ENCODE measurements at regions of chr2 and their contacts with region 1.

Region 1: GRCh38 chr2:63614983-63615945 is 26.5 kb downstream of the MDH1 start:
- DNase-seq: peak; percentile 78 to 87
- H3K4me3 ChIP-seq: peak overlapping the region; percentile 35
- H3K4me3 Mint-ChIP-seq: peak overlapping the region; percentile 67
- H3K27ac Mint-ChIP-seq: peak overlapping the region; percentile 95
- H3K4me1 ChIP-seq: peaks cover 43% of the 10 kb centered on the region
- H3K4me1 Mint-ChIP-seq: peaks cover 44% of the 10 kb centered on the region
- H3K27me3 ChIP-seq: no peaks in the 10 kb centered on the region
- H3K27me3 Mint-ChIP-seq: no peaks in the 10 kb centered on the region
- CTCF ChIP-seq: no peak

Region 2: DNA sequence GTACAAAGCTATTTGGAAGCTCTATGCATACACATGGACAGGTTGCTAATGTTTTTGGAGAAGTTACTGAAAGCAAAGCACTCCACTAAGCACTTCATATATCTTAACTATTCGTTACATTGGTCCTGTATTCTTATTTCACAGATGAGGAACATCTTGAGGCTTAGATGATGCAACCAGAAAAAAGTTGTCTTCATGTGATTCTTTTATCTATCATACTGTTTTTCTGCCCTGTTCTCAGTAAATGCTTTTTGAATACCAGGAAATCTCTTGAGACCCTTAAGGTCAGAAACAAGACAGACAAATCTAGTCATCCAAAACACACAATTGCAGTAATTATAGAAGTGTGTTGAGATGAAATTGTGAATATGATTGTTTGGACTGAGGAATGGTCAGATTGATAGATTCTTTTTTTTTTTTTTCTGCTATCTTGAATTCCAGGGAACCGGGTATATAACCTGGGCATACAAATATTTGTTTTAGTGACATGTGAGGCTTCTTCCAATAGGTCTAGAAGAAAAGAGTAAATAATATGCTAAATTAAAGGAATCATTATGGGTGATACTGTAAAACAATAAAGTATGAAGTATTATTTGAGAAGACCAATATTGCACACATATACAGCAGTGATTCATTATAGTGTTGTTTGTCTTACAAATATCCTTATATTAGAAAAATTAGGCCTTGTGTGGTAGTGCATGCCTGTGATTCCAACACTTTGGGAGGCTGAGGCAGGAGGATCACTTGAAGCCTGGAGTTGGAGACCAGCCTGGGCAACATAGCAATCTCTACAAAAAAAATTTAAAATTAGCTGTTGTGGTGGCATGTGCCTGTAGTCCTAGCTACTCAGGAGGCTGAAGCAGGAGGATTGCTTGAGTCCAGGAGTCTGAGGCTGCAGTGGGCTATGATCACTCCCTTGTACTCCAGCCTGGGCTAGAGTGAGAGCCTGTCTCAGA is 876.0 kb before region 1 on chr2:
- CTCF ChIA-PET with region 1: no interaction called
- POLR2A ChIA-PET with region 1: no interaction called
- intact Hi-C with region 1: no loop called
- DNase-seq: no peak
- H3K4me3 ChIP-seq: no peak overlapping the region
- H3K4me3 Mint-ChIP-seq: no peak overlapping the region
- H3K27ac Mint-ChIP-seq: no peak overlapping the region
- H3K4me1 ChIP-seq: peaks cover 41% of the 10 kb centered on the region
- H3K4me1 Mint-ChIP-seq: peaks cover 46% of the 10 kb centered on the region
- H3K27me3 ChIP-seq: no peaks in the 10 kb centered on the region
- H3K27me3 Mint-ChIP-seq: no peaks in the 10 kb centered on the region
- CTCF ChIP-seq: no peak

Region 3: GRCh38 chr2:63588385-63589147 is 26.7 kb before region 1 on chr2 and contains the starts of genes MDH1 and WDPCP:
- CTCF ChIA-PET with region 1: no interaction called
- POLR2A ChIA-PET with region 1: interaction called, 8 read pairs
- intact Hi-C with region 1: loop called (anchors 1 kb)
- DNase-seq: peak; percentile 96 to 99
- H3K4me3 ChIP-seq: peak within 1 kb of the TSS; percentile 95
- H3K4me3 Mint-ChIP-seq: peak within 1 kb of the TSS; percentile 92
- H3K27ac Mint-ChIP-seq: peak within 1 kb of the TSS; percentile 96
- H3K4me1 ChIP-seq: 0 out of 2 replicates have a peak, but pooled peaks cover 7% of the 10 kb centered on the region
- H3K4me1 Mint-ChIP-seq: peaks cover 11% of the 10 kb centered on the region
- H3K27me3 ChIP-seq: no peaks in the 10 kb centered on the region
- H3K27me3 Mint-ChIP-seq: no peaks in the 10 kb centered on the region
- CTCF ChIP-seq: no peak
- total RNA-seq, gene MDH1: 159 and 181 TPM in 2 replicates
- total RNA-seq, gene WDPCP: 14.1 and 16.2 TPM in 2 replicates

Region 4: GRCh38 chr2:63661076-63661475 is 45.8 kb after region 1 on chr2:
- CTCF ChIA-PET with region 1: no interaction called
- POLR2A ChIA-PET with region 1: no interaction called
- intact Hi-C with region 1: loop called (anchors 5 kb)
- DNase-seq: no peak
- H3K4me3 ChIP-seq: no peak overlapping the region
- H3K4me3 Mint-ChIP-seq: no peak overlapping the region
- H3K27ac Mint-ChIP-seq: no peak overlapping the region
- H3K4me1 ChIP-seq: peaks cover 32% of the 10 kb centered on the region
- H3K4me1 Mint-ChIP-seq: peaks cover 14% of the 10 kb centered on the region
- H3K27me3 ChIP-seq: no peaks in the 10 kb centered on the region
- H3K27me3 Mint-ChIP-seq: no peaks in the 10 kb centered on the region
- CTCF ChIP-seq: no peak

Region 5: DNA sequence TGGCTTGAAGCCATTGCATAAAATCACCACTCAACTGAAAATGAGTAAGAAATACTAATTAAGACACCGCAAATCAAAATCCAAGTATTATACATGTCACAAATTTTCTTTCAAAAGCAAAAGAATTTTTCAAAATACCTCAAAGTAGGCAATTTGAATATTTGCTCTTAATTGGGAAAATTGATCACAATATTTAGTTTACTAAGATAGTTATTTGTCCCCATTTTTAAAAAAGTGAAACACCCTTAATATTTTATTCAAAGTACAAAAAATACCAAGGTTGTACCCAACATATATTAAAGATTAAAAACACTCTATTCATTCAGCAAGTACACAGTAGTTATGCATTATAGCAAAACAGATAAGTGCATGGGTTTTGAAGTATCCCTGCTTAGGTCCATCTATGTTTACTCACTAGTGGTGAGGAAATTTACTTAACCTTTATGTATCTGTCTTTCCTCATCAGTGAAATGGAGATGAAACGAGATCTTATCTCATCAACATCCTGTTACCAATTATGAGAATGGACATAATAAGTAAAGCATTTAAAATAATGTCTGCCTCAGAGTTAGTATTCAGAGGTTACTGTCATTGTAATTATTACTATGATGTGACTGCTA is 368.8 kb after region 1 on chr2:
- CTCF ChIA-PET with region 1: no interaction called
- POLR2A ChIA-PET with region 1: no interaction called
- intact Hi-C with region 1: no loop called
- DNase-seq: no peak
- H3K4me3 ChIP-seq: no peak overlapping the region
- H3K4me3 Mint-ChIP-seq: no peak overlapping the region
- H3K27ac Mint-ChIP-seq: no peak overlapping the region
- H3K4me1 ChIP-seq: peaks cover 35% of the 10 kb centered on the region
- H3K4me1 Mint-ChIP-seq: peaks cover 23% of the 10 kb centered on the region
- H3K27me3 ChIP-seq: no peaks in the 10 kb centered on the region
- H3K27me3 Mint-ChIP-seq: no peaks in the 10 kb centered on the region
- CTCF ChIP-seq: no peak